ENCODE measurements at regions of chr17 and their contacts with region 1.

Region 1: GRCh38 chr17:55527540-55528118 is 16.4 kb upstream of the SMIM36 start:
- DNase-seq: peak; percentile 18 to 24
- ATAC-seq: peak; percentile 57 to 66
- H3K4me3 ChIP-seq: no peak overlapping the region
- H3K27ac ChIP-seq: no peak overlapping the region
- H3K4me1 ChIP-seq: no peaks in the 10 kb centered on the region
- H3K27me3 ChIP-seq: no peaks in the 10 kb centered on the region
- CTCF ChIP-seq: peak; percentile 15 to 56 (median 51)
- POLR2A ChIP-seq: no peak

Region 2: DNA sequence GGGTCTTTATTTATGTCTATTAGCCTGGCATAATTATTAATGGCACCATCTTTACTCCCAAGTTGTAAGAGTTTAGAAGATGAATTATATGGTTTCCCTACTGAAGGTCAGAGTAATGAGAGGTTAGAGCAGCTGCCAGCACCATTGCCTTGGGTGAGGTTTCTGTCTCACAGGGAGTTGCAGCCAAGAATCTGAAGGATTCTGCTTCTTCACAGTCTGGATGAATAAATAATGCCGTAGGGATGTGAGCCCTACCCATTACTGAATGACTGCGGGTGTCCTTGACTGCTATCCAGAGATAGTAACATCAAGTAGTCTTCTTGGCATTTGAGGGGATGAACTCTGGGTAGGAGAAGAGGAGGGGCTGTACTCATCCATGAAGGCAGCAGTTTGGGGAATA is 36.5 kb after region 1 on chr17:
- in situ Hi-C with region 1: no loop called
- intact Hi-C with region 1: no loop called
- DNase-seq: no peak
- ATAC-seq: no peak
- H3K4me3 ChIP-seq: no peak overlapping the region
- H3K27ac ChIP-seq: no peak overlapping the region
- H3K4me1 ChIP-seq: no peaks in the 10 kb centered on the region
- H3K27me3 ChIP-seq: no peaks in the 10 kb centered on the region
- CTCF ChIP-seq: no peak
- POLR2A ChIP-seq: no peak

Region 3: DNA sequence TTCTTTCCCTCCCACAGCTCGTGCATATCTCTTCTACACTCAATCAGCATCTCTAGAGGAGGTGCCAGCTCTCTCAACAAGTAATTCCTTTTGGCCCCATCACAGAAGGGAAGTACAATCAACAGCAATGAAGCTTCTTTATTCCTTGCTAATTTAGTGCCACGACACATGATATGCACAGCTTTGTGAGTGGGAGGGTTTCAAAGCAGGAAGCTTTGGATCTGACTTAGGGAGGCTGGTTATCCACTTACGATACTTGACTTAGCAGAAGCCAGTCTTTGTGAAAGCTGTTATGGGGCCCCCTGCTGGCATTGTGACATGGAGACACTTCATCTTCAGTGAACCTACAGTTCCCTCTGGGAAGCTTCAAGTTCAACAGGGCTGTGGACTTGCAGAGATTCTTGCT is 114.0 kb after region 1 on chr17:
- in situ Hi-C with region 1: loop called in 1 of 4 experiments (anchors 25 kb)
- intact Hi-C with region 1: no loop called
- DNase-seq: peak; percentile 13 to 23
- ATAC-seq: no peak
- H3K4me3 ChIP-seq: no peak overlapping the region
- H3K27ac ChIP-seq: no peak overlapping the region
- H3K4me1 ChIP-seq: no peaks in the 10 kb centered on the region
- H3K27me3 ChIP-seq: no peaks in the 10 kb centered on the region
- CTCF ChIP-seq: peak; percentile 17 to 55 (median 43)
- POLR2A ChIP-seq: no peak

Region 4: GRCh38 chr17:55770148-55770870 is 242.7 kb after region 1 on chr17:
- in situ Hi-C with region 1: loop called (anchors 5 kb)
- intact Hi-C with region 1: loop called (anchors 1 kb)
- DNase-seq: no peak
- ATAC-seq: peak; percentile 70 to 83
- H3K4me3 ChIP-seq: no peak overlapping the region
- H3K27ac ChIP-seq: peak overlapping the region; percentile 20 to 48 (median 38)
- H3K4me1 ChIP-seq: peaks cover 10 to 13% of the 10 kb centered on the region in 2 donors
- H3K27me3 ChIP-seq: no peaks in the 10 kb centered on the region
- CTCF ChIP-seq: peak; percentile 69 to 75 (median 72)
- POLR2A ChIP-seq: no peak

Region 5: GRCh38 chr17:56319517-56319916 is 791.9 kb after region 1 on chr17:
- in situ Hi-C with region 1: loop called in 1 of 4 experiments (anchors 25 kb)
- intact Hi-C with region 1: no loop called
- DNase-seq: no peak
- ATAC-seq: peak; percentile 72 to 82
- H3K4me3 ChIP-seq: no peak overlapping the region
- H3K27ac ChIP-seq: no peak overlapping the region
- H3K4me1 ChIP-seq: no peaks in the 10 kb centered on the region
- H3K27me3 ChIP-seq: peaks cover 0 to 3% (median 0%) of the 10 kb centered on the region in 3 donors
- CTCF ChIP-seq: peak; percentile 24 to 65 (median 43)
- POLR2A ChIP-seq: no peak